ENCODE measurements at regions of chr5 and their contacts with region 1.

Region 1: GRCh38 chr5:177454397-177455035 is 7.9 kb downstream of the PRR7 start:
- DNase-seq: no peak
- ATAC-seq: peak; percentile 68
- H3K4me3 ChIP-seq: peak overlapping the region; percentile 82
- H3K27ac ChIP-seq: peak overlapping the region; percentile 67
- H3K4me1 ChIP-seq: peaks cover 11% of the 10 kb centered on the region
- H3K27me3 ChIP-seq: no peaks in the 10 kb centered on the region
- CTCF ChIP-seq: peak; percentile 79 to 98 (median 87); a peak in 4 of 6 replicates
- EP300 ChIP-seq: peak; percentile 39 to 70; a peak in 3 of 4 replicates
- POLR2A ChIP-seq: no peak
- RAD21 ChIP-seq: peak; percentile 84

Region 2: GRCh38 chr5:177311723-177312648 is 142.5 kb before region 1 on chr5 and contains the start of gene MXD3:
- CTCF ChIA-PET with region 1: interaction called, 11 read pairs
- POLR2A ChIA-PET with region 1: interaction called, 7 read pairs
- RAD21 ChIA-PET with region 1: interaction called, 3 read pairs
- SMC1A ChIA-PET with region 1: interaction called, 7 read pairs
- in situ Hi-C with region 1: loop called (anchors 5 kb)
- intact Hi-C with region 1: loop called (anchors 2 kb)
- DNase-seq: peak; percentile 76
- ATAC-seq: peak; percentile 89
- H3K4me3 ChIP-seq: peak within 1 kb of the TSS; percentile 93
- H3K27ac ChIP-seq: peak within 1 kb of the TSS; percentile 92
- H3K4me1 ChIP-seq: peaks cover 17% of the 10 kb centered on the region
- H3K27me3 ChIP-seq: no peaks in the 10 kb centered on the region
- CTCF ChIP-seq: no peak
- EP300 ChIP-seq: no peak
- POLR2A ChIP-seq: peak; percentile 78
- RAD21 ChIP-seq: no peak
- polyA plus RNA-seq, gene MXD3: 0.24 to 0.93 TPM

Region 3: GRCh38 chr5:177351385-177352329 is 102.9 kb before region 1 on chr5 and contains the start of gene LMAN2:
- CTCF ChIA-PET with region 1: interaction called, 16 read pairs
- POLR2A ChIA-PET with region 1: no interaction called
- RAD21 ChIA-PET with region 1: interaction called, 4 read pairs
- SMC1A ChIA-PET with region 1: no interaction called
- in situ Hi-C with region 1: no loop called
- intact Hi-C with region 1: no loop called
- DNase-seq: peak; percentile 93
- ATAC-seq: peak; percentile 99
- H3K4me3 ChIP-seq: peak within 1 kb of the TSS; percentile 98
- H3K27ac ChIP-seq: peak within 1 kb of the TSS; percentile 89
- H3K4me1 ChIP-seq: peaks cover 21% of the 10 kb centered on the region
- H3K27me3 ChIP-seq: no peaks in the 10 kb centered on the region
- CTCF ChIP-seq: no peak
- EP300 ChIP-seq: no peak
- POLR2A ChIP-seq: peak; percentile 88
- RAD21 ChIP-seq: no peak
- polyA plus RNA-seq, gene LMAN2: 2.4 to 11.4 TPM

Region 4: DNA sequence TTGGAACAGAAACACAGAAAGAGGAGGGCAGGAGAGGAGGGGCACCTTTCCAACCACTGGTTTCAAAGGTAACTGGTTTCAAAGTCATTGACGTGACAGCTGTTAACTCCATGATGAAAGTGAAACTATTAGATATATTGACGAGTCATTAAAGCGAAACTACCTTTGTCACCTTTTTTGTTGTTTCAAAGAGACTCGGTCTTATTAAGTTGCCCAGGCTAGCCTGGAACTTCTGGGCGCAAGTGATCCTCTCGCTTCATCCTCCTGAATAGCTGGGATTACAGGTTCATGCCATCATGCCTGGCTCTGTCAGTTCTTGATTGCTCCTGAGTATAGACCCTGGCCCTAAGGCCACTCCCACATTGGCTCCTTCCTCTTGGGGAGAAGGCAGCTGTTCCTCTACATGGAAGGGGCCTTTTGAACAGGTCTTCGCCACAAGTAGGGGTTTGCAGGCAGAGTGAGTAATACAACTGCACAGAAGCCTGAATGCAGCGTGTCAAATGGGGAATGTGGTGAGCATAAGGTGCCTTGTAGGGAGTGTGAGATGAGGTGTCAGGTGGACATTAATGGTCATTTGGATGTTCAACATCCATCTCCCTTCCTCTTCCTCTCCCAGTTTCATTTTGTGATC is 41.8 kb before region 1 on chr5:
- CTCF ChIA-PET with region 1: interaction called, 10 read pairs
- POLR2A ChIA-PET with region 1: interaction called, 6 read pairs
- RAD21 ChIA-PET with region 1: interaction called, 6 read pairs
- SMC1A ChIA-PET with region 1: interaction called, 9 read pairs
- in situ Hi-C with region 1: no loop called
- intact Hi-C with region 1: loop called (anchors 2 kb)
- DNase-seq: peak; percentile 71
- ATAC-seq: peak; percentile 88
- H3K4me3 ChIP-seq: peak overlapping the region; percentile 33; the same call in 1 of the 2 replicates
- H3K27ac ChIP-seq: peak overlapping the region; percentile 83
- H3K4me1 ChIP-seq: peaks cover 18% of the 10 kb centered on the region
- H3K27me3 ChIP-seq: no peaks in the 10 kb centered on the region
- CTCF ChIP-seq: no peak
- EP300 ChIP-seq: peak in 1 of 2 experiments; percentile 74; a peak in 3 of 4 replicates
- POLR2A ChIP-seq: peak; percentile 66
- RAD21 ChIP-seq: no peak

Region 5: GRCh38 chr5:177431317-177432142 is 23.0 kb before region 1 on chr5:
- CTCF ChIA-PET with region 1: interaction called, 114 read pairs
- POLR2A ChIA-PET with region 1: interaction called, 358 read pairs
- RAD21 ChIA-PET with region 1: interaction called, 288 read pairs
- SMC1A ChIA-PET with region 1: interaction called, 55 read pairs
- in situ Hi-C with region 1: no loop called
- intact Hi-C with region 1: loop called (anchors 2 kb)
- DNase-seq: peak; percentile 77
- ATAC-seq: peak; percentile 59
- H3K4me3 ChIP-seq: peak overlapping the region; percentile 83; the same call in 1 of the 2 replicates
- H3K27ac ChIP-seq: peak overlapping the region; percentile 94
- H3K4me1 ChIP-seq: peaks cover 49% of the 10 kb centered on the region
- H3K27me3 ChIP-seq: no peaks in the 10 kb centered on the region
- CTCF ChIP-seq: no peak
- EP300 ChIP-seq: peak; percentile 55 to 61; a peak in 3 of 4 replicates
- POLR2A ChIP-seq: no peak
- RAD21 ChIP-seq: no peak

Region 6: DNA sequence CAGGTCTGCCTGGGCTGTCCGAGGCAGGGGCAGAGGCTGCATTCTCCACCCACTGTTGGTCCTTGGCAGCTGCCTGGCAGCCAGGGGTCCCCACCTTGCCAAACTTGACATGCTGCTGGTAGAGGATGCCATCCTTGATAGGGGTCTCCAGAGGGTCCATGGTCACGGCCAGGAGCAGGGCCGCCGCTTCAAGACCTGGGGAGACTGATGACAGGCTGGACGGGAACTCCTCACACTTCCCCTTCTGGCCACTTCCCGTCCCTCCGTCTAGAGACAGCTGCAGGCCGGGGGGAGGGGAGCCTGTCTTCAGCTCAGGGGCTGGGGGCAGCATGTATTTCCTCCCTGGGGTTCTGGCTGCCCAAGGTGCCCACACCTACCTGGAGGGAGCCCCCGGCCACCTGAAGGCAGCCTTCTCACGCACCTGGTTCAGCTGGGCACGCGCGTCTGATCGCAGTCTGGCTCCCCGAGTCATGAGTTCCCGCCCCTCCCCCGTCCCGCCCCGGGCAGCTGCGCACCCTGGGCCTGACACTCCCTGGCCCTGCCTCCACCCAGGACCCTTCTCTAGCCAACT is 55.0 kb after region 1 on chr5 and contains the start of gene DOK3:
- CTCF ChIA-PET with region 1: interaction called, 38 read pairs
- POLR2A ChIA-PET with region 1: interaction called, 3 read pairs
- RAD21 ChIA-PET with region 1: interaction called, 17 read pairs
- SMC1A ChIA-PET with region 1: interaction called, 5 read pairs
- in situ Hi-C with region 1: no loop called
- intact Hi-C with region 1: no loop called
- DNase-seq: no peak
- ATAC-seq: peak; percentile 63
- H3K4me3 ChIP-seq: peak within 1 kb of the TSS; percentile 87
- H3K27ac ChIP-seq: peak within 1 kb of the TSS; percentile 87
- H3K4me1 ChIP-seq: peaks cover 37% of the 10 kb centered on the region
- H3K27me3 ChIP-seq: no peaks in the 10 kb centered on the region
- CTCF ChIP-seq: no peak
- EP300 ChIP-seq: no peak
- POLR2A ChIP-seq: no peak
- RAD21 ChIP-seq: no peak
- polyA plus RNA-seq, gene DOK3: 6.6 to 8.0 TPM

Region 7: DNA sequence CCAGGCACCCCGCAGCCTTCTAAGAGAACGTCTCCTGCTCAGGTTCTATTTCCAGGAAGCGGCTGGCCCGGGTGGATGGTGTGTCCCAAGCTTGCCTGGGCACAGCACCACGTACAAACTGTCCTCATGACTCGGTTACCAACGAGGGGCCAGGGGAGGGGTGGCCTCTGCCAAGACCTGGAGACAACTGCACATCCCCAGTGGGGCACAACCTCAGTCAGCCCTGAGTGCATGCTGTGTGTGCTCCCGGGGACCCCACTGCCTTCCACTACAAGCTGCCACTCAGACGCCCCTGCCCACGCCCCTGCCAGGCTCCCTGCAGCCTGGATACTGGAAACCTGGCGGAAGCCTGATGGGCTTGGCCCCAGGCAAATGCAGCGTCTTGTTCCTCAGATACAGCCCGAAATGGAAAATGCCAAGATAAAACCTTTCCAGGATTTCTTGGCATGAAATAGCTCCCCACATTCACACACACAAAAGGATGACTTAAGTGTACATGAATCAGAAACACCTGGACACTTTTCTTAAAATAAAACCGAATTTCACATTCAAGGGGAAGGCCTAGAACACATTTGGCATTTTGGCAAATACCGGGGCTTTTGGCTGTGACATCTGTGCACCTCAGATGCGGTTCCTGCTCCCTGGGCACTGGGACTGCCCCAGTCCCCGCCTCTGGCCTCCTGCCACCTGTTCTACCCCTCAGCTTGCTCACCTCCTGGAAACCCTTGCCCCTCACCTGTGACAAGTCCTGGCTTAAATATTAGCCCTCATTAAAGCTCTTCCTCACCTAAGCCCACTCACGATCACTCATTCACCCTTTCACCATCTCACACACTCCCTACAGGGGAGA is 1073.2 kb after region 1 on chr5:
- CTCF ChIA-PET with region 1: no interaction called
- POLR2A ChIA-PET with region 1: no interaction called
- RAD21 ChIA-PET with region 1: no interaction called
- SMC1A ChIA-PET with region 1: no interaction called
- in situ Hi-C with region 1: no loop called
- intact Hi-C with region 1: no loop called
- DNase-seq: no peak
- ATAC-seq: no peak
- H3K4me3 ChIP-seq: no peak overlapping the region
- H3K27ac ChIP-seq: no peak overlapping the region
- H3K4me1 ChIP-seq: no peaks in the 10 kb centered on the region
- H3K27me3 ChIP-seq: no peaks in the 10 kb centered on the region
- CTCF ChIP-seq: no peak
- EP300 ChIP-seq: no peak
- POLR2A ChIP-seq: no peak
- RAD21 ChIP-seq: no peak